A549 (cell line): ENCODE measurements at regions of chr19 and their contacts with region 1.

Region 1: DNA sequence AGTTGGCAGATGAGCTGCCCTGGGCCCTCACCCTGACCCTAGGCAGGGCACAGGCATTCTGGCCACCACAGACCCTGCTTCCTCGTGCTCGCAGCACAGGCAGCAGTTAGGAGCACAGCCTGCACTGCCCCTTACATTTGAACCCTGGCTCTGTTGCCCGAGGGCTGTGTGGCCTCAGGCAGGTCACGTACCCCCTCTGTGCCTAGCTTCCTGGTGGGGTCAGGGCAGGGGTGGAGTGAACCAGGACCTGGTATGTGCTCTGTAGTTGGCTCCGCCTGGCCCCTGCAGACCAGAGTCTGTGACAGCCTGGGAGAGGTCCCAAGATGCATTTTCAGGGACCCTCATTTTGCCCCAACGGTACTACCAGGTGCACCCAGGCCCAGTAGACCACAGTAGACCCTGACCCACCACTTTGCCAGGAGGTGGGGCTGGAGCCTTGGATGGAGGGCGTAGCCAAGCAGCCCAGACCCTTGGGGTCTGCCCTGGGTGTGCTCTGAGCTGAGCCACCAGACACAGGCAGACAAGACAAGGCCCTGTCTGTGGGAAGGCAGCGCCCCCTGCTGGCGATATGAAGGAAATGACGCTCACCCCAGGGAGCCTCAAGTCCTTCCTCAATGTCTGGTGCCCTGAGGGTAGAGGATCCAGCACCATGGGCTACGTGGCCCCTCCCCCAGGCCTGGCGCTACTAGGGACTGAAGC is 9.1 kb downstream of the LYL1 start:
- DNase-seq: peak; percentile 76 to 86
- ATAC-seq: peak; percentile 72 to 87
- H3K4me3 ChIP-seq: no peak overlapping the region
- H3K27ac ChIP-seq: peak overlapping the region in 1 of 2 experiments; percentile 79; a peak in 3 of 6 replicates
- H3K4me1 ChIP-seq: peaks cover 57% of the 10 kb centered on the region
- CTCF ChIP-seq: peak; percentile 81
- EP300 ChIP-seq: no peak
- POLR2A ChIP-seq: no peak
- RAD21 ChIP-seq: peak; percentile 89 to 94

Region 2: DNA sequence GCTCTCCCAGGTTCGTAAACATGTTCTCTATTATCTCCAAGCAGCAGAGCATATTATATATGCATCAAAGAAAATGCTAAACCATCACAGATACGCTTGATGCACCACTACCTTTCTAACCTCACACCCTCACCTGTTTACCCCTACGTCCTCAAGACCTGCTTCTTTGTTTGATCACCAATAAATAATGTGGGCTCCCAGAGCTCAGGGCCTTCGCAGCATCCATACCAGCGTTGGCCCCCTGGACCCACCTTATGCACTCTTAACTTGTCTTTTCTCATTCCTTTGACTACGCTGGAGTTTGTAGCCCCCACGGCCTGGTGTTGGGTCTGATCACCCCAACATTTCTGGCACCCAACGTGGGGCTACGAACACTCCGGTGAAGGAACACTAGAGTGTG is 642.7 kb before region 1 on chr19:
- CTCF ChIA-PET with region 1: no interaction called
- POLR2A ChIA-PET with region 1: no interaction called
- DNase-seq: no peak
- ATAC-seq: no peak
- H3K4me3 ChIP-seq: no peak overlapping the region
- H3K27ac ChIP-seq: no peak overlapping the region
- H3K4me1 ChIP-seq: no peaks in the 10 kb centered on the region
- CTCF ChIP-seq: no peak
- EP300 ChIP-seq: no peak
- POLR2A ChIP-seq: no peak
- RAD21 ChIP-seq: no peak

Region 3: GRCh38 chr19:12899891-12900518 is 193.6 kb before region 1 on chr19:
- CTCF ChIA-PET with region 1: no interaction called
- POLR2A ChIA-PET with region 1: no interaction called
- DNase-seq: no peak
- ATAC-seq: no peak; a peak in 1 of 6 replicates
- H3K4me3 ChIP-seq: no peak overlapping the region
- H3K27ac ChIP-seq: no peak overlapping the region
- H3K4me1 ChIP-seq: no peaks in the 10 kb centered on the region
- CTCF ChIP-seq: no peak
- EP300 ChIP-seq: no peak
- POLR2A ChIP-seq: no peak
- RAD21 ChIP-seq: no peak

Region 4: DNA sequence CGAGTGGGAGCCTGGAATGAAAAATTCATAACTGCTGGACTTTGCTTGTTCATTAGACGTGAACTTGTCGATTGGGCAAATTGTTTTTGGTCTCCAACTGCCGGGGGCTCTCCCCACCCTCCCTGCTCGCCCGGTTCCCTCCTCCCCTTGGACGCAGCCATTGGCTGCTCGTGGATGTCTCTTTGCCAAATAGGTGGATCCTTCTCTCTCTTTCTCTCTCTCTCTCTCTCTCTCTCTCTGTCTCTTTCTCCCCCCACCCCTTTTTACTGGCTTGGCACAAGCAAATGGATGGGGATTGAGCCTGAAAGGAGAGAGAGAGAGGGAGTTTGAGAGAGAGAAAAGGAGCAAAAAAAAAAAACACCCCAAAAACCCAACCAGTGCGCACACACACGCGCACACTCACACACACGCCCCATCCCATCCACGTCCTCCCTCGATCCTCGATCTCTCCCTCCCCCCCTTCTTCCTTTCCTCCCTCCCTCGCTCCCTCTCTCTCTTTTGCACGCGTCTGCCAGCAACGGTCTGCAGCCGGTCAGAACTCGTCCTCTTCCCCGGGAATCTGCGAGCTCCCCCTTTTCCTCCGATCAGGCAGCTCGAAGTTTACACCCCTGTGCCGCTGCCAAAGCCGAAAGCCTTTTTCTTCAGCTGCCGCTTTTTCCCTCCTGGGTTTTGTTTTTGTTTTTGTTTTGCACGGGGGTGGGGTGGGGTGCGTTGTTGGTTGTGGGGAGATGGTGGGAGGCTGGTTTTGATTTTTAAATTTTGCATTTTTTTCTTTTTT is 70.5 kb before region 1 on chr19:
- CTCF ChIA-PET with region 1: interaction called, 10 read pairs
- POLR2A ChIA-PET with region 1: no interaction called
- DNase-seq: peak in 1 of 2 experiments; percentile 25
- ATAC-seq: no peak
- H3K4me3 ChIP-seq: peak overlapping the region; percentile 36
- H3K27ac ChIP-seq: peak overlapping the region in 1 of 2 experiments; percentile 58; a peak in 3 of 6 replicates
- H3K4me1 ChIP-seq: peaks cover 19% of the 10 kb centered on the region
- CTCF ChIP-seq: no peak
- EP300 ChIP-seq: no peak
- POLR2A ChIP-seq: no peak
- RAD21 ChIP-seq: no peak

Region 5: GRCh38 chr19:13051267-13052165 is 42.0 kb before region 1 on chr19:
- CTCF ChIA-PET with region 1: interaction called, 21 read pairs
- POLR2A ChIA-PET with region 1: no interaction called
- DNase-seq: peak in 1 of 2 experiments; percentile 14
- ATAC-seq: peak; percentile 49 to 68; a peak in 3 of 6 replicates
- H3K4me3 ChIP-seq: no peak overlapping the region
- H3K27ac ChIP-seq: peak overlapping the region in 1 of 2 experiments; percentile 48; a peak in 3 of 6 replicates
- H3K4me1 ChIP-seq: peaks cover 36% of the 10 kb centered on the region
- CTCF ChIP-seq: no peak
- EP300 ChIP-seq: no peak
- POLR2A ChIP-seq: no peak
- RAD21 ChIP-seq: no peak

Region 6: GRCh38 chr19:13069415-13070359 is 23.9 kb before region 1 on chr19:
- CTCF ChIA-PET with region 1: interaction called, 47 read pairs
- POLR2A ChIA-PET with region 1: no interaction called
- DNase-seq: no peak
- ATAC-seq: peak; percentile 44 to 72; a peak in 5 of 6 replicates
- H3K4me3 ChIP-seq: no peak overlapping the region
- H3K27ac ChIP-seq: no peak overlapping the region
- H3K4me1 ChIP-seq: no peaks in the 10 kb centered on the region
- CTCF ChIP-seq: no peak
- EP300 ChIP-seq: no peak
- POLR2A ChIP-seq: no peak
- RAD21 ChIP-seq: no peak

Region 7: GRCh38 chr19:13104360-13104847 is 10.8 kb after region 1 on chr19:
- CTCF ChIA-PET with region 1: interaction called, 23 read pairs
- POLR2A ChIA-PET with region 1: no interaction called
- DNase-seq: peak in 1 of 2 experiments; percentile 31
- ATAC-seq: peak in 1 of 2 experiments; percentile 59; a peak in 3 of 6 replicates
- H3K4me3 ChIP-seq: no peak overlapping the region
- H3K27ac ChIP-seq: no peak overlapping the region
- H3K4me1 ChIP-seq: no peaks in the 10 kb centered on the region
- CTCF ChIP-seq: peak; percentile 34; the same call in 2 of the 3 replicates
- EP300 ChIP-seq: no peak
- POLR2A ChIP-seq: no peak
- RAD21 ChIP-seq: peak in 1 of 2 experiments; percentile 6; a peak in 1 of 5 replicates

Region 8: DNA sequence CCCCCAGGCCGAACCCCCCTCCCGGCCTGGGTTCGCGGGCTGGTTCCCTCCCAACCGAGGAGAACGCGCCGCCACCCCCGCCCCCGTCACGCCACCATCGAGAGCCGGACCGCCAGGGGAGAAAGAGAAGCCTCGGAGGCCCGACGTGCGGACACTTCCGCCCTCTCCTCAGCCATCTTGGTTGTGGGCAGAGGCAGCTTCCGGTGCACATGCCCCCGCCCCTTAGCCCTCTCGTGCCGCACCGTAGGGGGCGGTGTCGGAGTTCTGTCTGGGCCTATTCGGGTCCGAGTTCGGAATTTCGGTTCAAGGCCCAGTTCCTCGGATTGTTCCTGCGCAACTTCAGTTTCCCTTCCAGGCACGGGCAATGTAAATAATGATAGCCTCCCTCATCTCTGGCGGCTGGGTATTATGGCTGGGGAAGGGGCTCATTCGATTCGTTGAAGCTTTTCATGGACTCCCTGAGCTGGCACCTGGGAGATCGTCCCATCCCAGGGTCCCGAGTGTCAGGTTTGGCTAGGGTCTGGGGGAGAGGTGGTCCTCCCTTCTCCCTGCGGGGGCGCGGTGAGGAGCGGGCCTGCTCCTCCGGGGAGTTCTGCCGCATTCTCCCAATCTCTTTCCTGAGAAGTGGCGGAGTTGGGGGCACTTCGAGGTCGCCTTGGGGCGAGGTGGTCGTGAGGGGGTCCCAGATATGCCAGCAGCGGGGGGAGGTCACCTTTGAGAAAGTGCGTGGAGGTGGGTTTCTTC is 56.8 kb after region 1 on chr19 and contains the starts of genes IER2 and STX10:
- CTCF ChIA-PET with region 1: interaction called, 12 read pairs
- POLR2A ChIA-PET with region 1: no interaction called
- DNase-seq: peak; percentile 82 to 94
- ATAC-seq: peak; percentile 59 to 67
- H3K4me3 ChIP-seq: peak within 1 kb of the TSS; percentile 95
- H3K27ac ChIP-seq: peak within 1 kb of the TSS; percentile 99 to 100
- H3K4me1 ChIP-seq: peaks cover 8% of the 10 kb centered on the region; the same call in 1 of the 3 replicates
- CTCF ChIP-seq: peak; percentile 32
- EP300 ChIP-seq: no peak
- POLR2A ChIP-seq: peak; percentile 35
- RAD21 ChIP-seq: peak in 1 of 2 experiments; percentile 31; a peak in 2 of 5 replicates
- polyA plus RNA-seq, gene IER2: 52.5 and 75.7 TPM in 2 replicates
- polyA plus RNA-seq, gene STX10: 39.1 and 41.5 TPM in 2 replicates

Region 9: DNA sequence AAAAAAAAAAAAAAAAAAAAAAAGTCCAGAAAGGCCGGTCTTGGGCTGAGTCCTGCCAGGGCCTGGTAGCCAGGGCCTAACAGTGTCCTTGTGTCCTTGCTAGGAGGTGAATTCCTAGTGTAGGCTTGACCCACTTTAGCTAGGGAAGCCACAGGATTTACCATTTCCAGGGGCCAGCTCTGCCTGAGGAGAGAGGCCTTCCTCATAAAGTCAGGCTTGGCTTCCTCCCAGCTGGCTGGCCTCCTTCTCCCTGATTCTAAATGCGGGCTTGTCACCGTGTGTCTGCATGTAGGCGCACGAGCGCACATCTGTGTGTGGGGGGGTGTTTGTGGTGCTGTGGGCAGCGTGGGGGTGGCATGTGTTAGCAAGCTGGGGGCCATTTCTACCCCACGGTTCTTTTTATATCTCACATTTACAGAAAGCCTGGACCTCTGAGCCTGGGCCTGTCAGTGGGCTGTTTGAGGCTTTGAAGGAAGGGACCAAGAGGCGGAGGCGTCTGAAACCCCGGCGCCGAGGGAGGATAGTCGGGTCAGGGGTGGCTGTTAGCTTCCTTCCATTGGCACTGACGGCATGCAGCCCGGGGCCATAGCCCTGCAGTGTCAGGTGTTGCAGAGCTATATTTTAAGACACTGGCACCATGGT is 88.3 kb after region 1 on chr19:
- CTCF ChIA-PET with region 1: no interaction called
- POLR2A ChIA-PET with region 1: no interaction called
- DNase-seq: no peak
- ATAC-seq: no peak
- H3K4me3 ChIP-seq: no peak overlapping the region
- H3K27ac ChIP-seq: peak overlapping the region; percentile 47 to 79; a peak in 4 of 6 replicates
- H3K4me1 ChIP-seq: peaks cover 7% of the 10 kb centered on the region; the same call in 1 of the 3 replicates
- CTCF ChIP-seq: no peak
- EP300 ChIP-seq: no peak
- POLR2A ChIP-seq: no peak
- RAD21 ChIP-seq: no peak